CD4-positive, alpha-beta memory T cell (primary cell): ENCODE measurements at regions of chr21 and their contacts with region 1.

Region 1: DNA sequence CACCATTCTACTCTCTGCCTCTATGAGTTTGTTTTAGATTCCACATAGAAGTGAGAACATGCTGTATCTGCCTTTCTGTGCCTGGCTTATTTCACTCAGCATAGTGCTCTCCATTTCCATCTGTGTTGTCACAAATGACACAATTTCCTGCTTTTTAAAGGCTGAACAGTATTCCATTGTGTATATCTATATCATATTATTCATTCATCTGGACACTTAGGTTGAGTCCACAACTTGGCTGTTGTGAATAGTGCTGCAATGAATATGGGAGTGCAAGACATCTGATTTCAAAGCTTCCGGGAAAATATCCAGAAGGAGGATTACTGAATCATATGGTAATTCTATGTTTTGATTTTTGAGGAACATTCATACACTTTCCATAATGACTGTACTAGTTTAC is 20.1 kb upstream of the DONSON start:
- DNase-seq: no peak
- H3K4me3 ChIP-seq: no peak overlapping the region
- H3K4me3 Mint-ChIP-seq: no peak overlapping the region
- H3K27ac ChIP-seq: no peak overlapping the region
- H3K27ac Mint-ChIP-seq: peak overlapping the region in 2 of 7 donors; percentile 21 to 47
- H3K4me1 ChIP-seq: no peaks in the 10 kb centered on the region
- H3K4me1 Mint-ChIP-seq: peaks cover 0 to 5% (median 3%) of the 10 kb centered on the region in 4 donors
- H3K27me3 ChIP-seq: no peaks in the 10 kb centered on the region
- H3K27me3 Mint-ChIP-seq: no peaks in the 10 kb centered on the region

Region 2: GRCh38 chr21:32653311-32653901 is 955.2 kb before region 1 on chr21:
- CTCF ChIA-PET with region 1: no interaction called
- POLR2A ChIA-PET with region 1: no interaction called
- intact Hi-C with region 1: loop called (anchors 5 kb)
- DNase-seq: peak in 4 of 5 donors; percentile 10 to 33 (median 31)
- H3K4me3 ChIP-seq: no peak overlapping the region
- H3K4me3 Mint-ChIP-seq: no peak overlapping the region
- H3K27ac ChIP-seq: no peak overlapping the region
- H3K27ac Mint-ChIP-seq: peak overlapping the region in 1 of 7 donors; percentile 51
- H3K4me1 ChIP-seq: no peaks in the 10 kb centered on the region
- H3K4me1 Mint-ChIP-seq: peaks cover 0 to 1% (median 0%) of the 10 kb centered on the region in 4 donors
- H3K27me3 ChIP-seq: no peaks in the 10 kb centered on the region
- H3K27me3 Mint-ChIP-seq: no peaks in the 10 kb centered on the region

Region 3: GRCh38 chr21:33449616-33450015 is 158.9 kb before region 1 on chr21:
- CTCF ChIA-PET with region 1: interaction called, 18 read pairs
- POLR2A ChIA-PET with region 1: no interaction called
- intact Hi-C with region 1: loop called (anchors 5 kb)
- DNase-seq: no peak
- H3K4me3 ChIP-seq: no peak overlapping the region
- H3K4me3 Mint-ChIP-seq: no peak overlapping the region
- H3K27ac ChIP-seq: no peak overlapping the region
- H3K27ac Mint-ChIP-seq: no peak overlapping the region
- H3K4me1 ChIP-seq: no peaks in the 10 kb centered on the region
- H3K4me1 Mint-ChIP-seq: peaks cover 3 to 5% (median 4%) of the 10 kb centered on the region in 4 donors
- H3K27me3 ChIP-seq: no peaks in the 10 kb centered on the region
- H3K27me3 Mint-ChIP-seq: no peaks in the 10 kb centered on the region

Region 4: GRCh38 chr21:33566514-33566913 is 42.0 kb before region 1 on chr21:
- CTCF ChIA-PET with region 1: interaction called, 13 read pairs
- POLR2A ChIA-PET with region 1: interaction called, 3 read pairs
- intact Hi-C with region 1: no loop called
- DNase-seq: no peak
- H3K4me3 ChIP-seq: no peak overlapping the region
- H3K4me3 Mint-ChIP-seq: no peak overlapping the region
- H3K27ac ChIP-seq: no peak overlapping the region
- H3K27ac Mint-ChIP-seq: peak overlapping the region in 1 of 7 donors; percentile 27
- H3K4me1 ChIP-seq: peaks cover 36% of the 10 kb centered on the region
- H3K4me1 Mint-ChIP-seq: peaks cover 21 to 55% (median 31%) of the 10 kb centered on the region in 4 donors
- H3K27me3 ChIP-seq: no peaks in the 10 kb centered on the region
- H3K27me3 Mint-ChIP-seq: no peaks in the 10 kb centered on the region

Region 5: GRCh38 chr21:33588485-33589335 is 19.8 kb before region 1 on chr21 and contains the start of gene DONSON:
- CTCF ChIA-PET with region 1: interaction called, 32 read pairs
- POLR2A ChIA-PET with region 1: interaction called, 9 read pairs
- intact Hi-C with region 1: no loop called
- DNase-seq: peak; percentile 82 to 92 (median 89)
- H3K4me3 ChIP-seq: peak within 1 kb of the TSS; percentile 60 to 72
- H3K4me3 Mint-ChIP-seq: peak within 1 kb of the TSS; percentile 92 to 98 (median 94)
- H3K27ac ChIP-seq: peak within 1 kb of the TSS; percentile 78
- H3K27ac Mint-ChIP-seq: peak within 1 kb of the TSS; percentile 76 to 96 (median 95)
- H3K4me1 ChIP-seq: peaks cover 14% of the 10 kb centered on the region
- H3K4me1 Mint-ChIP-seq: peaks cover 5 to 18% (median 10%) of the 10 kb centered on the region in 4 donors
- H3K27me3 ChIP-seq: no peaks in the 10 kb centered on the region
- H3K27me3 Mint-ChIP-seq: no peaks in the 10 kb centered on the region
- total RNA-seq, gene DONSON: 11.0 to 13.7 TPM